ENCODE measurements at regions of chr12 and their contacts with region 1.

Region 1: DNA sequence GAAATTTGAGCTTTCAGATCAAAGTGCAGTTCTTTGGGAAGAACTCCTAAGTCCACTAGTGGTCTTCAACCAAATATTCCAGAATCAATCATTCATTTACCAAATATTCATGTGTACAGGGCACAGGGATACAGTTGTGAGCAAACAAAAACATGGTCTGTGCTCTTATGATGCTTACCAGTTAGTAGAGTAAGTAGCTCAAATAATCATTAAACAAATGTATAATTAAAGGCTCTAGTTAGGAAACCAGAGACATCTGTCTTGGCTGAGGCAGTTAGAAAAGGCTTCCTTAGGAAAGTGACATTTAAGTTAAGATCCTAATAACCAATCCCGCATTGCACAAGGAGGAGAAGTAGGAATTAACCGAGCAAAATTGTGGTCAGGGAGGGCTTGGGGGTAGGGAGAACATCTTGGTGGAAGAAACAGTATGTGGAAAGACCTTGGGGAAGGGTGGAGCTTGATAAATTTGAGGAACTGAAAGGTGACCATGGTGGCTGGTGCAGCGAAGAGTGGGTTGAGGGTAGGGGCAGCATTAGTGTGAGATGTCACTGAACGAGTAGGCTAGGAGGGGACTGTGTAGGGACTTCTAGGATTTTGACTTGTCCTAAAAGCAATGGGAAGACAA is 40.0 kb downstream of the PEBP1 start:
- DNase-seq: peak; percentile 53
- CTCF ChIP-seq: no peak

Region 2: DNA sequence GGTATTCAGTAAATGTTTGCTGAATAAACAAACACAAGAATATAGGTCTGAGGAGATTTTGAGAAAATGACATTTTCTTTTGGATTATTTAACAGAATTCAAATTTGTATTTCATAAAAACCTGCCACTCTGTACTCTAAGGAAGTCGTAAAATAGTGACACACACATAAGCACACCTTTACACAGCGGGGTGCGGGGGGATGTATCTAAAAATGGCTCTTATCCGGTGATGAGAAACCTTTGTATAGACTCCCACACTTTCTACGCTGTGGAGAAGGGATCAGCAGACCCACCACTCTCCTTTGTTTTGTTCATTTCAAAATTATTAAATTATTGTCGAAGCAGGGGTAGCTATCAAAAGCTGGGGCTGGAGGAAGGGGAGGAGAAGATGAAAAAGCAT is 18.0 kb after region 1 on chr12:
- CTCF ChIA-PET with region 1: interaction called, 12 read pairs
- POLR2A ChIA-PET with region 1: no interaction called
- DNase-seq: no peak
- CTCF ChIP-seq: no peak

Region 3: DNA sequence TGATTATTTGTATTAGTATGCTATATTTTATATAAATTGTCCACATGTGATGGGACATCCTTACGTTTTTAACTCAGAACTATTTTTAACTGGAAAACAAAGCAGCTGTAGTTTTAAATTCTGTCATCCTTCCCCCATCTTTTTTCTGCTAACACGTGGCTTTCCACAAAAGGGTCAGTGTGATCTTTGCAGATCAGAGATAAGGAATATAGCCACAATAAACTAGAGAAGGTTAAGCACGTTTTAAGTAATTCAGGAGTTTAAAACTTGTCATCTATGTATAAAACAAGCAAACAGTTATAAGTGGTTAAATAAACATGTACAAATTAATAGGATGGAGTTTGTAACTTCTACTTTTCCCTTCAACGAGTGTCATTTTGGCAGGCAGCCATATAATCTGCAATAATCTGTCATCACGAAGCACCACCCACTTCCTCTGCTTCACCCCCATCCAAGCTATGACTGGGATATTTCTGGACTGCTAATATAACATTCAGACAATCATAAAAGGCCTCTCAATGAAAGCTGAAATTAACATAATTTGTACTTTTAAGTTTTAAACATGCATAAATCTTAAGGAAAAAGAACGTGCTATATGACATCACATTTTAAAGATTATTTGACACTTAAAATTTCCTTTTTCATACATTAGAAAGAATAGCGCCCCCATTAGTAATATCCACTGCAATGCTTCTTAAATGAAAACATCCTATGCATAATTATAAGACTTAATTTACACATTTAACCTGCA is 181.5 kb after region 1 on chr12:
- CTCF ChIA-PET with region 1: interaction called, 15 read pairs
- POLR2A ChIA-PET with region 1: no interaction called
- DNase-seq: peak; percentile 47
- CTCF ChIP-seq: peak; percentile 32

Region 4: GRCh38 chr12:118446244-118446643 is 270.3 kb after region 1 on chr12:
- CTCF ChIA-PET with region 1: no interaction called
- POLR2A ChIA-PET with region 1: no interaction called
- DNase-seq: no peak
- CTCF ChIP-seq: no peak

Measured in GM10248 (cell line).